ENCODE measurements at regions of chr3 and their contacts with region 1.

Region 1: GRCh38 chr3:36124118-36124796 is 256.0 kb upstream of the STAC start:
- DNase-seq: peak; percentile 70
- ATAC-seq: peak; percentile 98
- H3K4me3 Mint-ChIP-seq: no peak overlapping the region
- H3K27ac Mint-ChIP-seq: no peak overlapping the region
- H3K4me1 Mint-ChIP-seq: peaks cover 11% of the 10 kb centered on the region
- H3K27me3 Mint-ChIP-seq: no peaks in the 10 kb centered on the region
- CTCF ChIP-seq: 0 out of 2 replicates have a peak, but pooled peaks have one; percentile 53

Region 2: DNA sequence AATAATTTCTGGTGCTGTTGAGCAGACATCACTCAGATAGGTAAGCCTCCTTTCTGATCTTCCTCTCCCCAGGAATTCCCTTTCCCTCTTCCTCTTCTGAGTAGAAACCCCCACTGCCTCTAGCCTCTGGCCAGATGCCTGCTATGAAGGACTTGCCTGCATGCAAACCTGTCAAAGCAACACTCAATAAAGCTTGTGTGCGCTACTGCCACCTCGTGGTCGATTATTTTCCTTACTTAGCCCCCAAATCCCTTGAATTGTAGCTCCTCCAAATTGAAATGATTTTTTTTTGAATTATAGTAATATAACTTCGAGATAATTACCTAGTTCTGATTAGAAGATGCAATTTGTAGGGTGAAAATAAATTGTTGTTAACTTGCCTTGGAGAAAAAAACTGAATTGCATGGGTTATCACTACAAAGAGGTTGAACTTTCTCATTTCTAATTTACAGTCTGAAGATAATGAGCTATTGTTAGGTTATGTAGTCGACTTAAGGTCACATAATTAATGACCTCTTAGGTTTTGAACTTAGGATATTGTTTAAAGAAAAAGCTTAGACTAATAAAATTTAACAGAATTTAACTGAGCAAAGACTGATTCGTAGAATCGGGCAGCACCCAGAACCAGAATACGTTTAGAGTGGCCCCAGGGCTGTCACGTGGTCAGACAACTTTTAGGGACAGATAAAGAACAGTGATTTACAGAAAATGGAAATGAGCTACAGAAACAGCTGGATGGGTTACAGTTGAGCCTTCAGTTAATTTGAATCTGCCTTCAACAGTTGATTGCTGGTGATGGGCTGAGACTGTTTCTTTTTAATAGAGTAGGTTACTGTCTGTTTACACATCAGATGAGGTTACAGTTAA is 215.7 kb before region 1 on chr3:
- CTCF ChIA-PET with region 1: no interaction called
- POLR2A ChIA-PET with region 1: no interaction called
- DNase-seq: peak; percentile 81
- ATAC-seq: peak; percentile 95
- H3K4me3 Mint-ChIP-seq: no peak overlapping the region
- H3K27ac Mint-ChIP-seq: no peak overlapping the region
- H3K4me1 Mint-ChIP-seq: peaks cover 30% of the 10 kb centered on the region
- H3K27me3 Mint-ChIP-seq: no peaks in the 10 kb centered on the region
- CTCF ChIP-seq: peak; percentile 72

Region 3: GRCh38 chr3:35921706-35922105 is 202.6 kb before region 1 on chr3:
- CTCF ChIA-PET with region 1: no interaction called
- POLR2A ChIA-PET with region 1: no interaction called
- DNase-seq: no peak
- ATAC-seq: no peak
- H3K4me3 Mint-ChIP-seq: no peak overlapping the region
- H3K27ac Mint-ChIP-seq: no peak overlapping the region
- H3K4me1 Mint-ChIP-seq: no peaks in the 10 kb centered on the region
- H3K27me3 Mint-ChIP-seq: no peaks in the 10 kb centered on the region
- CTCF ChIP-seq: no peak

Region 4: DNA sequence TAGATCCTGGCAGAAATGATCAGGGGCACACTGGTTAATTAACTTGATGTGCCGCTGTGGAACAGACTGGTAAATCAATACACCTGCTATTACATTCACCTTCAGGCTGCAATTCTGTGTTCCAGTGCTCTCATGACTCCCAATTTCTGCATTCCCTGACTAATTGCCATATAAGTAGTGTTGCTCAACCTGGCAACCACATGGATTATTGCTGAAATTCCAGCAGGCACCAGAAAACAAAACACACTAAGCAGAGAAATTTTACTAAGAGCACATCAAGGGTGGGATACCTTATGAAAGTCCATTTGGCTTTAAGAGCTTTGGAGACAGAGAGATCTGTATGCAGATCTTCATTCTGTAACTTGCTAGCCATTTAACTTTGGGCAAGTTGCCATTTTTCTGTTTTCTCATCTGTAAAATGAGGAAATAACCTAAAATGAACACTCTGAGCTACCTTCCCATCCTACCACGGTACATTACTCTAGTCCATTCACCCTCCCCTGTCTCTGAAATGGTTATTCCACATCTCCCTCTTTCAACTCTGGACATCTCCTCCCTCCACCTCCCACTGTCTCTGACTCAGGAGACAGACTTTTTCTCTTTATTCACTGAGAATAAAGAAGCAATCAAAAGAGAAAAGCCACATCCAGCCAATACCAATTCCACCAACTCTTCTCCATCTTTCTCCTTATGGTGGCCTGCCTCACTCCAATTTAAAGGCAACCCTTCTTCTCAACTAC is 310.6 kb after region 1 on chr3:
- CTCF ChIA-PET with region 1: no interaction called
- POLR2A ChIA-PET with region 1: no interaction called
- DNase-seq: no peak
- ATAC-seq: no peak
- H3K4me3 Mint-ChIP-seq: no peak overlapping the region
- H3K27ac Mint-ChIP-seq: no peak overlapping the region
- H3K4me1 Mint-ChIP-seq: no peaks in the 10 kb centered on the region
- H3K27me3 Mint-ChIP-seq: no peaks in the 10 kb centered on the region
- CTCF ChIP-seq: no peak

Region 5: GRCh38 chr3:36540888-36541518 is 416.7 kb after region 1 on chr3:
- CTCF ChIA-PET with region 1: interaction called, 16 read pairs
- POLR2A ChIA-PET with region 1: no interaction called
- DNase-seq: peak; percentile 58
- ATAC-seq: peak; percentile 86
- H3K4me3 Mint-ChIP-seq: no peak overlapping the region
- H3K27ac Mint-ChIP-seq: no peak overlapping the region
- H3K4me1 Mint-ChIP-seq: no peaks in the 10 kb centered on the region
- H3K27me3 Mint-ChIP-seq: no peaks in the 10 kb centered on the region
- CTCF ChIP-seq: peak; percentile 74

Region 6: DNA sequence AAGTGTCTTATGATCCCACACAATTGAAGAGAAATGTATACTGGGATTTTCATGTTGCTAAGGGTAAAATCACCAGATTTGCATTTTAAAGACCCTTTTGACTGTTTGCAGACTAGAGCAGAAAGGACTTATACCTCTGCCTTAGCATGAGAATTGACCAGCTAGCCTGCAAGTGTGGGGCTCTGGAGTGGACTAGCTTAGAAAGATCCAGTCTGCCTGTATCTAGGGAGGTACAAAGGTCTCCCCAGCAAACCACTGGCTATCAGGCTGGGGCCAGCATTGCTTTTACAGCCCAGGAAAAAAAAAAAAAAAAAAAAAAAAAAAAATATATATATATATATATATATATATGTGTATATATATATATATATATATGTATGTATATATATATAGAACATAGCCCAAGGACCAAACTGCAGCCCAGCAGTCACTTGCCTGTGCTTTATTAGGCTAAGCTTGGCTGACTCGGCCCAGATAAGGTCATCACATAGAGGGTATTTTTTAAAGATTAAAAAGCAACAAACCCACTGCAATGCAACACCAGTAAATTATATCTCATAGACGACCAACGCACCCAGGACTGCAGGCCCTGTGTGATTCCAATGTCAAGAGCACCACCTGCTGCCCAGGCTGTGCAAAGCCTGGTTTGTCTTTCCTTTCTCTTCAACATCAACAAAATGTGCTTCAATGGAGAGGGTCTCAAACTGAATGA is 576.4 kb after region 1 on chr3:
- CTCF ChIA-PET with region 1: interaction called, 16 read pairs
- POLR2A ChIA-PET with region 1: no interaction called
- DNase-seq: peak; percentile 69
- ATAC-seq: peak; percentile 86
- H3K4me3 Mint-ChIP-seq: no peak overlapping the region
- H3K27ac Mint-ChIP-seq: no peak overlapping the region
- H3K4me1 Mint-ChIP-seq: peaks cover 18% of the 10 kb centered on the region
- H3K27me3 Mint-ChIP-seq: no peaks in the 10 kb centered on the region
- CTCF ChIP-seq: peak; percentile 51

Measured in WTC11 (cell line).